Aorta (tissue), 5 donors: ENCODE measurements at regions of chr2 and their contacts with region 1.

Region 1: DNA sequence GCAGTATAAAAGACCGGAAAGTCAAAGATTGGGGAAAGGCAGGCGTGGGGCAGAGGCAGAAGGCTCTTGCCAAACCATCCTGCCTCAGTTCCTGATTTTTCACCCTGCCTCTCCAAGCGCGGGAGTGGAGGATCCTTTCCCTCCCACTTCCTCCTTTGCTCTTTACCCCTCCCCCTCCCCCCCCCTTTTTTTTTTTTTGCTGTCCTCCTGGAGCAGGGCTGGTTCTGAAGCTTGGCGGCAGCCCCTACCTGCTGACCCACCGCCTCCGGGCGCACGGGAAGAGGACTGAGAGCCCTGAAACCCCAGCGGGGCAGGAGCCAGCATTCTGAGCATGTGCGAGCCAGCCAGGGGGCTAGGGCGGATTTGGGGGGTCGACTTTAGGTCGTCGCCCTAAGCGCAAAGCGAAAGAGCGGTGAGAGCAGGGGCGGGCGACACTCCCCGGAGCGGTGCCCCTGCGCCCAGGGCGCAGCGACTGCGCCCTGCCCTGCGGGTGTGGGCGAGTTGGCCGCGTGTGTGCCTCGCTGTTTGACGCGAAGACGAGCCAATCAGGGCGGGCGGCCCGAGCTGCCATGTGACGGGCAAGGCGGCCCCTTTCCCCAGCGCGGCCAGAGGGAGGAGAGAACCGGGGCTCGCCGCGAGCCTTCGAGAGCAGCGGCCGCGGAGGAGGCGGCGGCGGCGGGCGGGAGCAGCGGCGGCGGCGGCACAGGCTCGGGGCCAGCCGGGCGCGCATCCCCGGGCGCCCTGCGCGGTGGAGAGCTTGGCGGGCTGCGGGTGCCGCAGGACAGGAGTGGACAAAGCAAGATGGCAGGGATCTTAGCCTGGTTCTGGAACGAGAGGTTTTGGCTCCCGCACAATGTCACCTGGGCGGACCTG is at the start of gene CERS6:
- DNase-seq: peak; percentile 98
- ATAC-seq: peak; percentile 98
- H3K4me3 ChIP-seq: peak within 1 kb of the TSS; percentile 84
- H3K27ac ChIP-seq: peak within 1 kb of the TSS in 1 of 2 donors; percentile 9
- H3K4me1 ChIP-seq: peaks cover 0 to 3% of the 10 kb centered on the region in 2 donors
- H3K27me3 ChIP-seq: no peaks in the 10 kb centered on the region
- total RNA-seq, gene CERS6: 8.3 to 10.6 TPM

Region 2: DNA sequence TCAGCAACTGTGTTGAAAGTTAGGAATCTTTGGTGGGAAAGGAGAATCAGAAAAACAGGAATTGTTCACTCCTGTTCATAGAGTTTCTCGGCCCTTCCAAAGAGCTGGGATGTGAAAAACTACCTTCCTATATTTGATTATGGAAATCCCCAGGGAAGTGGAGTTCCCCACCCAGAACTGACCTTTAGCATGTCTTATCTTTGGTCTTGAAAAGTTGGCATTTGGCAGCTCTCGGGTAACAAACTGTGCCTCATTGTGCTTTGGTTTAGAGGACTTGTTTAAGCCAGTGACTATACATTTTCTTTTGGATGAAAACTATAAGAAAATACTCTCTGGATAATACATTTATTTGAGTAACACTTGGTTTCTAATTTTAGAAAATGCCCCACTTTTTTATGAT is 51.1 kb before region 1 on chr2:
- intact Hi-C with region 1: no loop called
- DNase-seq: no peak
- ATAC-seq: no peak
- H3K4me3 ChIP-seq: no peak overlapping the region
- H3K27ac ChIP-seq: no peak overlapping the region
- H3K4me1 ChIP-seq: no peaks in the 10 kb centered on the region
- H3K27me3 ChIP-seq: peaks cover 0 to 1% of the 10 kb centered on the region in 2 donors

Region 3: GRCh38 chr2:168514692-168515091 is 58.8 kb after region 1 on chr2:
- intact Hi-C with region 1: loop called in 1 of 2 experiments (anchors 5 kb)
- DNase-seq: no peak
- ATAC-seq: no peak
- H3K4me3 ChIP-seq: no peak overlapping the region
- H3K27ac ChIP-seq: no peak overlapping the region
- H3K4me1 ChIP-seq: peaks cover 2 to 10% of the 10 kb centered on the region in 2 donors
- H3K27me3 ChIP-seq: no peaks in the 10 kb centered on the region